ENCODE measurements at regions of chr2 and their contacts with region 1.

Region 1: GRCh38 chr2:70069049-70069448 is 18.2 kb upstream of the PCBP1 start:
- DNase-seq: no peak
- ATAC-seq: peak; percentile 47
- H3K4me3 ChIP-seq: no peak overlapping the region
- H3K27ac ChIP-seq: peak overlapping the region; percentile 83
- H3K4me1 ChIP-seq: peaks cover 34% of the 10 kb centered on the region
- H3K27me3 ChIP-seq: no peaks in the 10 kb centered on the region
- CTCF ChIP-seq: no peak

Region 2: DNA sequence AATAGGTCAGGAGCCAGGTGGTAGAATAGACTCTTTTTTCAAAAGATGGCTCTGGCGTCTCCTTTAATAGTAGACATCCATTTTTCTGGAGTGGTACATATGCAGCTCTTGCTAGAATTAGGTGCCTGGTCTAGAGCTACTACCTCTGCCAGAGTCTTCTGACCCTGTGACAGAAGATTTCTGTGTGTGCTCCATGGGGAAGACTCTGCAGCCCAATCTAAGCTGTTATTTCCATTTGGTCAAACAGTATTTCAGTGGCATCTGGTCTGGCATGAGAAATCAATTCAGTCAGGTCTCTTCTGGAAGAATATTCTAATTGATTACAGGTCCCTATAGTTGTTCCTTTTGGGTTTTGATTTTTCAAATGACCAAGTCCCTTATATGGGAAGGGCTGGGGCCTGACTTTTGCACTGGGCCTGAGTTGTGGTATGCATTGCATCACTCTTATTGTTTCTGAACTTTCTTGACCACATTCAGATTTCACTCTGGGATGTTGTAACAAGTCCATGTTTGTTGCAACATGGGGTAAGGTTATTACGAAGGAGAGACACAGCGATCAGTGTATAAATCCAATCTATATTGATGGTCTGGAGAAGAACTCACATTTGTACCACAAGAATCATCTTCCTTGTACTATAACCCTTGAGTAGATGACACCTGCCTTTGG is 142.1 kb before region 1 on chr2:
- intact Hi-C with region 1: loop called (anchors 10 kb)
- DNase-seq: no peak
- ATAC-seq: peak; percentile 74
- H3K4me3 ChIP-seq: no peak overlapping the region
- H3K27ac ChIP-seq: no peak overlapping the region
- H3K4me1 ChIP-seq: peaks cover 1% of the 10 kb centered on the region
- H3K27me3 ChIP-seq: no peaks in the 10 kb centered on the region
- CTCF ChIP-seq: no peak

Measured in upper lobe of right lung (tissue), 1 donor.